MCF 10A (cell line): ENCODE measurements at regions of chr6 and their contacts with region 1.

Region 1: GRCh38 chr6:83067448-83068413 is at the start of gene DOP1A:
- DNase-seq: peak; percentile 95
- H3K4me3 Mint-ChIP-seq: peak within 1 kb of the TSS; percentile 85
- H3K27ac Mint-ChIP-seq: peak within 1 kb of the TSS; percentile 17
- H3K4me1 Mint-ChIP-seq: peaks cover 22% of the 10 kb centered on the region
- H3K27me3 Mint-ChIP-seq: no peaks in the 10 kb centered on the region
- CTCF ChIP-seq: peak; percentile 94
- total RNA-seq, gene DOP1A: 25.8 and 31.3 TPM in 2 replicates

Region 2: GRCh38 chr6:82298012-82298411 is 769.7 kb before region 1 on chr6:
- CTCF ChIA-PET with region 1: interaction called, 11 read pairs
- POLR2A ChIA-PET with region 1: no interaction called
- intact Hi-C with region 1: no loop called
- DNase-seq: peak; percentile 78
- H3K4me3 Mint-ChIP-seq: peak overlapping the region; percentile 43
- H3K27ac Mint-ChIP-seq: peak overlapping the region; percentile 88
- H3K4me1 Mint-ChIP-seq: peaks cover 17% of the 10 kb centered on the region
- H3K27me3 Mint-ChIP-seq: no peaks in the 10 kb centered on the region
- CTCF ChIP-seq: no peak

Region 3: GRCh38 chr6:83086751-83087150 is 19.0 kb after region 1 on chr6:
- CTCF ChIA-PET with region 1: interaction called, 17 read pairs
- POLR2A ChIA-PET with region 1: interaction called, 14 read pairs
- intact Hi-C with region 1: no loop called
- DNase-seq: no peak
- H3K4me3 Mint-ChIP-seq: no peak overlapping the region
- H3K27ac Mint-ChIP-seq: no peak overlapping the region
- H3K4me1 Mint-ChIP-seq: peaks cover 6% of the 10 kb centered on the region
- H3K27me3 Mint-ChIP-seq: no peaks in the 10 kb centered on the region
- CTCF ChIP-seq: no peak

Region 4: GRCh38 chr6:83119742-83120300 is 52.1 kb after region 1 on chr6:
- CTCF ChIA-PET with region 1: interaction called, 96 read pairs
- POLR2A ChIA-PET with region 1: interaction called, 15 read pairs
- intact Hi-C with region 1: loop called (anchors 2 kb)
- DNase-seq: peak; percentile 52
- H3K4me3 Mint-ChIP-seq: no peak overlapping the region
- H3K27ac Mint-ChIP-seq: no peak overlapping the region
- H3K4me1 Mint-ChIP-seq: no peaks in the 10 kb centered on the region
- H3K27me3 Mint-ChIP-seq: no peaks in the 10 kb centered on the region
- CTCF ChIP-seq: no peak

Region 5: GRCh38 chr6:83169511-83169910 is 101.8 kb after region 1 on chr6:
- CTCF ChIA-PET with region 1: interaction called, 21 read pairs
- POLR2A ChIA-PET with region 1: interaction called, 3 read pairs
- intact Hi-C with region 1: no loop called
- DNase-seq: no peak
- H3K4me3 Mint-ChIP-seq: no peak overlapping the region
- H3K27ac Mint-ChIP-seq: no peak overlapping the region
- H3K4me1 Mint-ChIP-seq: no peaks in the 10 kb centered on the region
- H3K27me3 Mint-ChIP-seq: no peaks in the 10 kb centered on the region
- CTCF ChIP-seq: no peak

Region 6: DNA sequence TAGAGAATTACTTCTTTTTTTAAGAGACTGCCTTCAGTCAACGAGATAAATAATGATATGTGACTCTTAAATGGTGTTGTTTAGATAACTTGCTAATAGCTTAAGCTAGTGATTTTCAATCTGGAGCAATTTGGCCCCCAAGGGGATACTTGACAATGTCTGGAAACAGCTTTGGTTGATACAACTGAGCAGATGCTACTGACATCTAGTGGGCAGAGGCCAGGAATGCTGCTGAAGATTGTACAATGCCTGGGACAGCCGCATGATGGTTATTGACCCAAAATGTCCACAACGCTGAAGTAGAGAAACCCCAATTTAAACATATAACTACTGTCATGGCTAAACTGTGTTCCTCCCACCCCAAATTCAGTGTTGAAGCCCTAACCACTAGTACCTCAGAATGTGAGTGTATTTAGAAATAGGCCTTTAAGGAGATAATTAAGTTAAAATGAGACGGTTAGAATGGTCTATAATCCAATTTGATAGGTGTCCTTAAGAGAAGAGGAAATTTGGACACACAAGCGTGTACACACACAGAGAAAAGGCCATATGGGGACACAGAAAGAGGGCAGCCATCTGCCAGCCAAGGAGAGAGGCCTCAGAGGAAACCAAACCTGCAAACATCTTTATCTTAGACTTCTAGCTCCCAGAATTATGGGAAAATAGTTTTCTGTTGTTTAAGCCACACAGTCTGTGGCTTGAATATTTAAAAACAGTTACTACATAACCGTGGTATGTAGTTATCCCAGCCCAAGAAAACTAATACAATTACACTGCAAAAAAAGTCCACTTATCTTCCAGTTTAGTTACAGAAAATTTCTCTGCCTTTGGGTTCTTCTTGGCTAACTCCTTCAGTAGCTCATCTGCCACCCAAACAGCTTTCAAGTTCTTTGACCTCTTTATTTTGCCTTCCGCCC is 147.7 kb after region 1 on chr6:
- CTCF ChIA-PET with region 1: interaction called, 231 read pairs
- POLR2A ChIA-PET with region 1: interaction called, 50 read pairs
- intact Hi-C with region 1: loop called (anchors 1 kb)
- DNase-seq: peak; percentile 77
- H3K4me3 Mint-ChIP-seq: no peak overlapping the region
- H3K27ac Mint-ChIP-seq: no peak overlapping the region
- H3K4me1 Mint-ChIP-seq: no peaks in the 10 kb centered on the region
- H3K27me3 Mint-ChIP-seq: no peaks in the 10 kb centered on the region
- CTCF ChIP-seq: peak; percentile 71

Region 7: GRCh38 chr6:83514866-83515466 is 447.2 kb after region 1 on chr6:
- CTCF ChIA-PET with region 1: interaction called, 67 read pairs
- POLR2A ChIA-PET with region 1: interaction called, 3 read pairs
- intact Hi-C with region 1: loop called (anchors 1 kb)
- DNase-seq: peak; percentile 71
- H3K4me3 Mint-ChIP-seq: no peak overlapping the region
- H3K27ac Mint-ChIP-seq: no peak overlapping the region
- H3K4me1 Mint-ChIP-seq: peaks cover 6% of the 10 kb centered on the region
- H3K27me3 Mint-ChIP-seq: no peaks in the 10 kb centered on the region
- CTCF ChIP-seq: peak; percentile 81

Region 8: DNA sequence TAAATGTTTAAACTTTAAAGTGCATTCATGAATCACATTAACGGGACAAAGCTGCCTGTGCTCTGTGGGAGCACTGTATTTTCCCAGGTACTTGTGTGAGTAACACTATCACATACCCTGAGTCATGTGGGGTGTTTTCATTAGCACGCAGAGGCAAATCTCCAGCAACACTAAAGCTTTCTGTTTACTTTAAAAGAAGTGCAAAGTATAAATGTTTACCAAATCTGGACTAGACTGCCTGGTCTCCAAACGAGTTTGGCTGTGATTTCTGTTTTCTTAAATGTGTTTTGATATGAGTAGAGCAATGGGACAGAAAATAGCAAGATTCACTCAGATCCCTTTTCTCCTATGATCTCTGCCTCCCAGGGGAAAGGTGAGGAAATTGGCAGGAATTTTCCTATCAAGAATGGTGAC is 756.7 kb after region 1 on chr6:
- CTCF ChIA-PET with region 1: no interaction called
- POLR2A ChIA-PET with region 1: no interaction called
- intact Hi-C with region 1: no loop called
- DNase-seq: peak; percentile 73
- H3K4me3 Mint-ChIP-seq: no peak overlapping the region
- H3K27ac Mint-ChIP-seq: peak overlapping the region; percentile 51
- H3K4me1 Mint-ChIP-seq: peaks cover 10% of the 10 kb centered on the region
- H3K27me3 Mint-ChIP-seq: no peaks in the 10 kb centered on the region
- CTCF ChIP-seq: no peak